ENCODE measurements at regions of chr19 and their contacts with region 1.

Region 1: GRCh38 chr19:40305403-40305802 is 20.3 kb upstream of the AKT2 start:
- DNase-seq: peak; percentile 100
- ATAC-seq: peak; percentile 92
- H3K4me3 ChIP-seq: no peak overlapping the region
- H3K27ac ChIP-seq: no peak overlapping the region
- H3K4me1 ChIP-seq: no peaks in the 10 kb centered on the region
- H3K27me3 ChIP-seq: peaks cover 11% of the 10 kb centered on the region
- CTCF ChIP-seq: no peak

Region 2: GRCh38 chr19:38551450-38551813 is 1754.0 kb before region 1 on chr19:
- CTCF ChIA-PET with region 1: interaction called, 11 read pairs
- POLR2A ChIA-PET with region 1: no interaction called
- in situ Hi-C with region 1: no loop called
- intact Hi-C with region 1: no loop called
- DNase-seq: no peak
- ATAC-seq: peak; percentile 6; the same call in 1 of the 2 replicates
- H3K4me3 ChIP-seq: no peak overlapping the region
- H3K27ac ChIP-seq: no peak overlapping the region
- H3K4me1 ChIP-seq: peaks cover 4% of the 10 kb centered on the region; the same call in 1 of the 2 replicates
- H3K27me3 ChIP-seq: peaks cover 6% of the 10 kb centered on the region; the same call in 1 of the 2 replicates
- CTCF ChIP-seq: no peak

Region 3: DNA sequence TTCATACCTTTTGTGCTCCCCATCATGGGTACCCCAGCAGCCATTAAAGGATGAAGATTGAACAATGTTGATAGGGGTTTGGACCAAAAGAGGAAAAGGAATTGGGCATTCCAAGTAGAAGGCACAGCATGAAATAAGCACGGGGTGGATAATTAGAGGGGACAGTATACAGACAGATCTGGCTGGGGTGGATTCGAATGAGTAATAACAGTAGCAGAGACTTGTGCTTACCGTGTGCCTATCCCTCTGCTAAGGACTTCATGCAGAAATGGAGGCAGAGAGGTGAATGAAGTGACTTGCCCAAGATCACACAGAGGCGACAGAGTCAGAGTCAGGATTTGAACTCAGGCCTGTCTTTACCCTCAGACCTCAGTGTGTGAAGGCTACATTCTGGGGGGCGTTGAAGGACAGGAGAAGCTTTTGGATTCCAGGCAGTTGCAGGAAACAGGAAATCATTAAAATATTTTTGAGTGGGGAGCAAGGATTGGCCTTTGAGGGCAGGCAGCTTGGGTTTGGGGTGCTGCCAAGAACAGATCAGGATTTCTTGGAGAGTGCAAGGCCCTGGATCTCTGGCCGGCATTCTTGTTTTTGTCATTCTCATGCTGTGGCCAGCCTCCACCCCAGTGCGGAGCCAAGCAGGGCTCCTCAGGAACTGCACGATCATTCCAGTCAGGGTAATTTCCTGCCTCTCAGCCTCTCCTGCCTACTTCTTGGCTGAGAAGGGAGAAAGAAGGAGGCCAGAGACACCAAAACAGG is 933.2 kb before region 1 on chr19:
- CTCF ChIA-PET with region 1: no interaction called
- POLR2A ChIA-PET with region 1: no interaction called
- in situ Hi-C with region 1: no loop called
- intact Hi-C with region 1: no loop called
- DNase-seq: no peak
- ATAC-seq: peak; percentile 2
- H3K4me3 ChIP-seq: no peak overlapping the region
- H3K27ac ChIP-seq: no peak overlapping the region
- H3K4me1 ChIP-seq: no peaks in the 10 kb centered on the region
- H3K27me3 ChIP-seq: no peaks in the 10 kb centered on the region
- CTCF ChIP-seq: no peak

Region 4: GRCh38 chr19:40090241-40091204 is 214.9 kb before region 1 on chr19 and contains the start of gene ZNF780A:
- CTCF ChIA-PET with region 1: no interaction called
- POLR2A ChIA-PET with region 1: interaction called, 6 read pairs
- in situ Hi-C with region 1: loop called (anchors 5 kb)
- intact Hi-C with region 1: no loop called
- DNase-seq: peak; percentile 100
- ATAC-seq: peak; percentile 99
- H3K4me3 ChIP-seq: peak within 1 kb of the TSS; percentile 36 to 48
- H3K27ac ChIP-seq: peak within 1 kb of the TSS; percentile 83
- H3K4me1 ChIP-seq: peaks cover 15% of the 10 kb centered on the region
- H3K27me3 ChIP-seq: no peaks in the 10 kb centered on the region; the same call in 1 of the 2 replicates
- CTCF ChIP-seq: no peak
- total RNA-seq, gene ZNF780A: 251 TPM

Region 5: GRCh38 chr19:40165362-40165937 is 140.0 kb before region 1 on chr19:
- CTCF ChIA-PET with region 1: interaction called, 111 read pairs
- POLR2A ChIA-PET with region 1: interaction called, 3 read pairs
- in situ Hi-C with region 1: no loop called
- intact Hi-C with region 1: no loop called
- DNase-seq: peak; percentile 99
- ATAC-seq: peak; percentile 76
- H3K4me3 ChIP-seq: peak overlapping the region in 1 of 2 experiments; percentile 0; a peak in 1 of 4 replicates
- H3K27ac ChIP-seq: 0 out of 2 replicates have a peak overlapping the region, but pooled peaks have one; percentile 0
- H3K4me1 ChIP-seq: peaks cover 15% of the 10 kb centered on the region
- H3K27me3 ChIP-seq: no peaks in the 10 kb centered on the region
- CTCF ChIP-seq: no peak

Region 6: GRCh38 chr19:40231544-40232424 is 73.6 kb before region 1 on chr19:
- CTCF ChIA-PET with region 1: interaction called, 35 read pairs
- POLR2A ChIA-PET with region 1: interaction called, 3 read pairs
- in situ Hi-C with region 1: no loop called
- intact Hi-C with region 1: no loop called
- DNase-seq: no peak
- ATAC-seq: peak; percentile 62
- H3K4me3 ChIP-seq: no peak overlapping the region
- H3K27ac ChIP-seq: peak overlapping the region; percentile 35
- H3K4me1 ChIP-seq: peaks cover 35% of the 10 kb centered on the region
- H3K27me3 ChIP-seq: peaks cover under 1% of the 10 kb centered on the region; the same call in 1 of the 2 replicates
- CTCF ChIP-seq: no peak

Region 7: DNA sequence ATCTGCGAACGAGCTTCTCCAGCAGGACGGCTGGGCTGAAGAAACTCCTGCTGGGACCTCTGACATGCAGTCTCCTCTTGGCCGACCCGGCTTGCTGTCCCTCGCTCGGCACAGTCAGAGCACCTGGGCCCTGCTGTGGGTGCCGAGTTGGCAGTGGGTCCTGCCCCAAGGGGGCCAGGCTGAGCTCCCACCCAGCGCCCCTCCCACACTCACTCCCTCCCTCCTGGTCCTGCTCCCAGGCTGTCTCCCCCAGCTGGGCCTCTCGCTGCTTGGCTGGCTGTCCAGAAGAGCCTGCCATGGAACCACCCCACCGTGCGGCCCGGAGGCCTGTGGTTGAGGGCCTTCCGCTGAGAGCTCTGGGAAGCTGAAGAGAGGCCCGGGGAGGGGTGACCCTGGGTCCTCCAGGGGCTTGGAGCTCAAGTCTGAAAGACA is 26.3 kb before region 1 on chr19:
- CTCF ChIA-PET with region 1: interaction called, 116 read pairs
- POLR2A ChIA-PET with region 1: interaction called, 14 read pairs
- in situ Hi-C with region 1: no loop called
- intact Hi-C with region 1: no loop called
- DNase-seq: no peak
- ATAC-seq: no peak
- H3K4me3 ChIP-seq: no peak overlapping the region
- H3K27ac ChIP-seq: no peak overlapping the region
- H3K4me1 ChIP-seq: peaks cover 67% of the 10 kb centered on the region
- H3K27me3 ChIP-seq: no peaks in the 10 kb centered on the region
- CTCF ChIP-seq: no peak

Region 8: DNA sequence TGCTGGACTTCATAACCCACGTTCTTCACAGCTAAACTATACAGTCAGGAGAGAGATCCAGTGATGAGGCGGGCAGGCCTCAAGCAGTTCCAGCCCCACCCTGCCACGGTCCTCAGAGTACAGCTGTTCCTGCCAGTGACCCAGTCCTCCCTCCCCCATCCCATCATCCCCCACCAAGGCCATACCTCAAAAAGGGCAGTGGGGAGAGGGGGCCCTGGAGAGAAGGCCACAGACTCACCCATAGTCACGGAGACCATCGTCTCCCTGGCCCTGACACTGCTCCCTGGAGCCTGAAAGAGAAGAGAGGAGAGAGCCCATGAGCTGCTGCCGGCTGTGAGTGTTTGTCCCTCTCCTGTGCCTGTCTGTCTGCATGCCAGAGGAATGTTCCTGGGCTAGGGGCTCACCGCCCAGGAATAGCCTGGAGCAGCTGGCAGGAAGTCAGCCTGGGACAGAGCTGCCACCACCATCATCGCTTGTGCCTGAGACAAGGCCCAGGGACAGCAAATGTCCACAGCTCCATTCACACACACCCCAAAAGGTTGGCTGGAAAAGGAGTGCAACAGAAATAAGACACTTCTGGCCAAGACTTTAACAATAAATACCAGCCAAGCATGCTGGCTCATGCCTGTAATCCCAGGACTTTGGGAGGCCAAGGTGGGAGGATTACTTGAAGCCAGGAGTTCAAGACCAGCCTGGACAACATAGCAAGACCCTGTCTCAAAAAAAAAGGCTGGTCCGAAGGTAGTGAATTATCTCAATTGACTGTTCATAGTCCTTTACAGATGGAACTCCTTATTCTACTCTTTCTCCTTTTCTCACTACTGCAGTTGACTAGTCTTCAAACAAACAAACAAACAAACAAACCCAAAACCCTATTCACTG is 36.4 kb after region 1 on chr19:
- CTCF ChIA-PET with region 1: interaction called, 498 read pairs
- POLR2A ChIA-PET with region 1: interaction called, 4 read pairs
- in situ Hi-C with region 1: loop called (anchors 5 kb)
- intact Hi-C with region 1: loop called (anchors 2 kb)
- DNase-seq: no peak
- ATAC-seq: peak; percentile 67
- H3K4me3 ChIP-seq: no peak overlapping the region
- H3K27ac ChIP-seq: no peak overlapping the region
- H3K4me1 ChIP-seq: no peaks in the 10 kb centered on the region
- H3K27me3 ChIP-seq: peaks cover 2% of the 10 kb centered on the region; the same call in 1 of the 2 replicates
- CTCF ChIP-seq: no peak

Measured in Panc1 (cell line).